AG04450 (cell line): ENCODE measurements at regions of chr3 and their contacts with region 1.

Region 1: GRCh38 chr3:190424478-190425439 is 24.9 kb downstream of the TMEM207 start:
- DNase-seq: peak; percentile 37
- H3K4me3 ChIP-seq: no peak overlapping the region
- H3K27ac ChIP-seq: no peak overlapping the region
- H3K27me3 ChIP-seq: no peaks in the 10 kb centered on the region
- CTCF ChIP-seq: peak; percentile 75

Region 2: GRCh38 chr3:190414297-190414696 is 10.5 kb before region 1 on chr3:
- CTCF ChIA-PET with region 1: interaction called, 39 read pairs
- POLR2A ChIA-PET with region 1: no interaction called
- DNase-seq: no peak
- H3K4me3 ChIP-seq: no peak overlapping the region
- H3K27ac ChIP-seq: no peak overlapping the region
- H3K27me3 ChIP-seq: no peaks in the 10 kb centered on the region
- CTCF ChIP-seq: no peak

Region 3: DNA sequence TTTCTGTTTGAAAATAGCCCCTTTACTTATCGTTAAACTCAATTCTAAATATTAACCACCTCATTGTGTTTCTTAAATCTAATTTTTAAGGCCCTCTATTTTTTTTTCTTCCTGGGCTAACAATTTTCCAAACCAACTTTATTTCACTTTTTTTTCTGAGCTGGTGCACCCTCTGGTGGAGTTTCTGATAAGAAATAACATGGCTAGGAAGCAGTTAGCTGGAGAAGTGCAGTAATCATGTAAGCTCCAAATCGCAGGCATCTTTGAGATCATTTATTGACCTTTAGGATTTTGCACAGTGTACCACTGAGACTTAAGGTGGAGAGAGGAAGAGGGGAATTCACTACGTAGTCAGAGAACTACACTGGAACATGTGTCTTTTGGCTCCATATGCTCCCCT is 18.5 kb after region 1 on chr3:
- CTCF ChIA-PET with region 1: interaction called, 19 read pairs
- POLR2A ChIA-PET with region 1: no interaction called
- DNase-seq: no peak
- H3K4me3 ChIP-seq: no peak overlapping the region
- H3K27ac ChIP-seq: no peak overlapping the region
- H3K27me3 ChIP-seq: no peaks in the 10 kb centered on the region
- CTCF ChIP-seq: peak; percentile 54